ENCODE measurements at regions of chr4 and their contacts with region 1.

Region 1: GRCh38 chr4:69689599-69689998 is 36.6 kb upstream of the UGT2A1 start:
- DNase-seq: no peak
- H3K4me3 ChIP-seq: no peak overlapping the region
- H3K27ac ChIP-seq: no peak overlapping the region
- H3K4me1 ChIP-seq: no peaks in the 10 kb centered on the region
- H3K27me3 ChIP-seq: no peaks in the 10 kb centered on the region
- CTCF ChIP-seq: peak; percentile 53

Region 2: DNA sequence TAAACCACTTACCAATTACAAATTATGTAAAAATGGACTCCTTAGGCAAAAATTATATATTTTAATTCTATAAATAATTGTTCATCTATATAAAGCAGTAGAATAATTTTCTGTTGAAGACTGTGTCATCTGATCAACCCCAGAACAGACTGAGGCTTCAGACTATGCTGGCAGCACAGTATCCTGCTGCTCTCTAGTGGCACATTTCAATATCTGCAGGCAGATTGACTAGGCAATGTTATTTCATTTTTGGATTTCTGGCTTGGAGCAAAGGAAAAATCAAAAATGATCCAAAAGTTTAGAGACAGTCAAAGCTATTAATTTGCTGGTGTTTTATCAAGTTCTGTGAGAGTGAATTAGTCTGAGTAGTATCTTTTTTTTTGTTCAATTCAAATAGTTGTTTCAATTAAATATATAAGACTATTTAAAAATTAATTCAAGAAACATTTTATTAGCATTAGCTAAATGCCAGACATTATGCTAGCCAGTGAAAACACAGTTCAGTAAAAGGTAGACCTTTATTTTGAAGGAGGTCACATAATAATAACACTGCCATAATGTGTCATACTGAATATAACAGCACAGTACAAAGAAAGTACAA is 191.7 kb after region 1 on chr4:
- intact Hi-C with region 1: loop called (anchors 2 kb)
- DNase-seq: peak; percentile 31
- H3K4me3 ChIP-seq: no peak overlapping the region
- H3K27ac ChIP-seq: no peak overlapping the region
- H3K4me1 ChIP-seq: no peaks in the 10 kb centered on the region
- H3K27me3 ChIP-seq: no peaks in the 10 kb centered on the region
- CTCF ChIP-seq: peak; percentile 81

Region 3: GRCh38 chr4:69970071-69970470 is 280.5 kb after region 1 on chr4:
- intact Hi-C with region 1: no loop called
- DNase-seq: no peak
- H3K4me3 ChIP-seq: no peak overlapping the region
- H3K27ac ChIP-seq: no peak overlapping the region
- H3K4me1 ChIP-seq: no peaks in the 10 kb centered on the region
- H3K27me3 ChIP-seq: no peaks in the 10 kb centered on the region
- CTCF ChIP-seq: no peak

Region 4: GRCh38 chr4:70505151-70505748 is 815.7 kb after region 1 on chr4:
- intact Hi-C with region 1: loop called (anchors 5 kb)
- DNase-seq: peak; percentile 50
- H3K4me3 ChIP-seq: no peak overlapping the region
- H3K27ac ChIP-seq: no peak overlapping the region
- H3K4me1 ChIP-seq: no peaks in the 10 kb centered on the region
- H3K27me3 ChIP-seq: no peaks in the 10 kb centered on the region
- CTCF ChIP-seq: peak; percentile 74

Measured in colonic mucosa (tissue), 4 donors.